ENCODE measurements at regions of chr10 and their contacts with region 1.

Region 1: DNA sequence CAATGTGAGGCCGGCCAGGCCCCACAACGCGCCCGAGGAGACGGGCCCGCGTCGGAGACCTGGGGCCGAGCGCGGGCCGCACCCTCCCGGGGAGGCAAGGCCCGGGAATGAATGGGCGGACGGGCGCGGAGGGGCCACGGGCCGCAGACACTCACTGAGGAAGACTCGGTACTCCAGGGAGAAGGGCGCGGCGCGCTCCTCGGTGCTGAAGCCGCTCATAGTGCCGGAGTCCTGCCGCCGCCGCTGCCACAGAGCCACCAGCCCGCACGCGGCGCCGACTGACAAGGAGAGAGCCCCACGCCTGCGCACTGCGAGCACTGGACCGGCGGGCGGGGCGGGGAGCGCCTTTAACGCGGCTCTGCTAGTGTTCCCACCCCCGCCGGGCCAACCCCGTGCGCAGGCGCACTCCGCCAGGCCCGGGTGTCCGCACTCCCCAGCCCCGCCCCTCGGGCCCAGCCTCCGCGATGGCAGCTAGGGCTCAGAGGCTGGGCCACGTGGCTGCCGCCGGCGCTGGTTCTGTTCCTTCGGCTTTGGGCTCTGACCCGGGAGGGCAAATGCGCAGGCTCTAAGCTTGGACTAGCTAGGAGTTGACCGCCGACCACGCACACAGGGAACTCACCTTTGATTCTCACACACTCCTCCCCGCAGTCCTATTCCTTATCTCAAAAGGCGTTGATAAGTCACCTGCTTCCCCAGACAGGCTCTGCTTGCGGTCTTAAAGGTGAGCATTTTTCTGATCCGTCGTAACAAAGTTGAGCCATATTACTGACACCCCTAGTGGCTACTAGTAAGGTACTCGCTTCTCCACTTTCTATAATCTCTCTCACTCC is at the start of gene PPA1:
- DNase-seq: peak; percentile 96
- H3K4me3 Mint-ChIP-seq: peak within 1 kb of the TSS; percentile 90
- H3K27ac Mint-ChIP-seq: peak within 1 kb of the TSS; percentile 97
- H3K4me1 Mint-ChIP-seq: peaks cover 32% of the 10 kb centered on the region
- H3K27me3 Mint-ChIP-seq: no peaks in the 10 kb centered on the region
- CTCF ChIP-seq: no peak
- total RNA-seq, gene PPA1: 221 and 293 TPM in 2 replicates

Region 2: DNA sequence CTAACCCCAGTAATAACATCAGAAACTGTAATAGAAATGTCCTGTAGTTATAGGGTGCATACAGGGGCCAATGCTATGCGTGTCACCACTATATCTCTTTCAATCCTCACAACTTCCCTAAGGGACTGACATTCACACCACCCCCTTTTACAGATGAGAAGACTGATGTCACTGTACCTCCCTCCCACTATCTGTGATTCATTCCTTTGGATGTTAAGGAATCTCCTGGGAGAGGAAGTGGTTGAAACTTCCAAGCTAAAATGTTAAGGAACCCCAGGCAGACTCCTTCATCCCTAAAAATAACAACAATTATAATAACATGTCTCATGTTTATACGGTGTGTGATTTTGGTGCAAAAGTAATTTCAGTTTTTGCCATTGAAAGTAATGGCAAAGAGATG is 426.2 kb before region 1 on chr10:
- CTCF ChIA-PET with region 1: no interaction called
- POLR2A ChIA-PET with region 1: no interaction called
- intact Hi-C with region 1: no loop called
- DNase-seq: peak; percentile 29
- H3K4me3 Mint-ChIP-seq: no peak overlapping the region
- H3K27ac Mint-ChIP-seq: no peak overlapping the region
- H3K4me1 Mint-ChIP-seq: peaks cover 7% of the 10 kb centered on the region
- H3K27me3 Mint-ChIP-seq: no peaks in the 10 kb centered on the region
- CTCF ChIP-seq: no peak

Region 3: DNA sequence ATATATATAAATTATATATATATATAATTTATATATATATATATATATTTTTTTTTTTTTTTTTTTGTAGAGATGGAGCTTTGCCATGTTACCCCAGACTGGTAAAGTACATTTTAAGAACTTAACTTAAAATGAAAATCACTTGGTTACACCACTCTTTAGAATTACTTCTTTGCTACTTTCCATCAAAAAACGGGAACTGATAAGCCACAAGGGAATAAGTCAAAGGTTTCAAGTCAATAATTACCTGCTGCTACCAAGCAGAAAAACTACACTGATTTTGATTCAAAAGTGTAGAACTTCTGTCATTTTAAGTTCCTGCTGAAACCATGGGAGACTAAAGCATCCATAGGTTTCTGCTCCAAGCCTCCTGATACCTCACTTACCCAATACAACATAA is 12.3 kb before region 1 on chr10:
- CTCF ChIA-PET with region 1: interaction called, 5 read pairs
- POLR2A ChIA-PET with region 1: interaction called, 77 read pairs
- intact Hi-C with region 1: no loop called
- DNase-seq: no peak
- H3K4me3 Mint-ChIP-seq: peak overlapping the region; percentile 45
- H3K27ac Mint-ChIP-seq: peak overlapping the region; percentile 87
- H3K4me1 Mint-ChIP-seq: peaks cover 32% of the 10 kb centered on the region
- H3K27me3 Mint-ChIP-seq: no peaks in the 10 kb centered on the region
- CTCF ChIP-seq: no peak

Region 4: GRCh38 chr10:70272925-70273316 is 39.6 kb after region 1 on chr10:
- CTCF ChIA-PET with region 1: interaction called, 4 read pairs
- POLR2A ChIA-PET with region 1: interaction called, 43 read pairs
- intact Hi-C with region 1: no loop called
- DNase-seq: peak; percentile 30
- H3K4me3 Mint-ChIP-seq: no peak overlapping the region
- H3K27ac Mint-ChIP-seq: no peak overlapping the region
- H3K4me1 Mint-ChIP-seq: peaks cover 8% of the 10 kb centered on the region
- H3K27me3 Mint-ChIP-seq: no peaks in the 10 kb centered on the region
- CTCF ChIP-seq: peak; percentile 28

Region 5: DNA sequence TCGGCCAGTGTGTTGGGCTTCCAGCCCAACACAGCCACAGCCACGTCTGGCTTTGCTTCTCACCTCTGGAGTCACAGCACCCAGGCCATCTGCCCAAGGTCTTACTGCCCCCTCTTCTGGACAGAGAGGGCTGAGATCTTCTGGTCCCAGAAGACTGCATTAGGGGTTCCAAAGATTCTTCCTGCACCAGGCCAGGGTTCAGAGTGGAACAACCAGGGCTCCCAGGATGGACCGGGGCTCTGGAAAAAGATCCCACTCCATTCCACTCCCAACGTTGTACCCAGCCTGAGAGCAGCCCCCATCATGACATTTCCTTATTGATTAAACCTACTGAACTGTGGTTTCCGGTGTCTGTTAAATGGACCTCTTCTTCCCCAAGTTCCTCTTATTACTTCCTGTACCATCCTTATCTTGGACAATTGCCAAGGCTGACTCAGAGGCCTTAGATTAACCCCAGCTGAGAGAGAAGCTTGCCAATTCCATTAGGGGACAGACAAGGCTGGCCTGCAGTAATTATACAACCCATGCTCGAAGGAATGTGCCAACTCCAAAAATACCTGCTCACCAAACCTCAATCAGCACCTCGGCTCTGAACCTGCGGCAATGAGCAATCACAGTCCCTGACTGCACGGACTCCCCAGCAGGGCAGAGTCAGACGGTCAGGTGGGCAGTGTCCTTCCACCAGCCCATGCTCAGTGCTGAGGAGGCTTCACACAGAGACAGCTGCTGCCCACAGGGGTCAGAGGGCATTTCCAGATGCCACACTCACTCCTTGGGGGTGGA is 98.4 kb after region 1 on chr10:
- CTCF ChIA-PET with region 1: interaction called, 3 read pairs
- POLR2A ChIA-PET with region 1: interaction called, 11 read pairs
- intact Hi-C with region 1: no loop called
- DNase-seq: peak; percentile 98
- H3K4me3 Mint-ChIP-seq: no peak overlapping the region
- H3K27ac Mint-ChIP-seq: peak overlapping the region; percentile 79
- H3K4me1 Mint-ChIP-seq: peaks cover 19% of the 10 kb centered on the region
- H3K27me3 Mint-ChIP-seq: no peaks in the 10 kb centered on the region
- CTCF ChIP-seq: no peak

Region 6: DNA sequence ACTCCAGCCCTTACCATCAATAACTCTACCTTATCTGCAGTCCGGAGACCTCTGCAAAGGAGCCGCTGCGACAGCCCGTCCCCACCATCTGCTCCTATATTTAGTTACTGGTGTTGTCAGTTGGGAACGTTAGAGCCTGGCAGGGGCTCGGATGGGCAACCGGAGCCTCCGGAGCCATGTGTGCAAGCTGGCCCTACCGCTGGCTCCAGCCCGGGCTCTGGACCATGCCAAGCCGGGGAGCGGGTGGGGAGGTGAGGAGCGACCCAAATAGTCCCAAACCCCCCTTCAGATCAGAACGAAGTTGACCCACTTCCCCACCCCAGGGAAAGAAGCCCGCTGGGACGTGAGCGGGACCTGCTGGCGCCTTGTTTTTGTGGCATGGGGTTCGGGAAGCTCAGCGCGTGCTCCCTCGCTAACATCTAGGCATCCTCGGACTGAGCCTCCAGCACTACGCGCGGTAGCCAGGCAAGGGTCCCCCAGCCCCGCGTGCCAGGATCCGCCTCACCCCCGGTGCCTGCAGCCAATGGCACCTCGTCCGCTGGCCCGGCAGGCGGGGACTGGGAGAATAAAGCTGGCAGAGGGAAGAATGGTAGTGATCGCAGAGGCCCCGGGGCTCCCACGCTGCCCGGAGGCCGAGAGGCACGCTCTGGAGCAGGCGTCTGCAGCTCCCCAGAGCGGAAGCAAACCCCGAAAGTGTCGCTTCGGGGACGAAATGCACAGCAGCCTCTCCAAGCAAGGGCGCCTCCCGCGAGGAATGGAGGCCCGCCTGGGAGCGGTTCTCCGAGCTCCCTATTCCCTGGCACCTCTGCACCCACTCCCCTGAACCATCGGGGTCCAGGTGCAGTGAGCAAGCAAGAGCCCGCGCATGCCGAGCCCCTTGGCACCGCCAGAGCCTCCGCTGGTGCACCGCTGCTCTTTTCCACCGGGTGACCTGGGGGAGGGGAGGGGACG is 148.4 kb after region 1 on chr10:
- CTCF ChIA-PET with region 1: no interaction called
- POLR2A ChIA-PET with region 1: interaction called, 21 read pairs
- intact Hi-C with region 1: no loop called
- DNase-seq: no peak
- H3K4me3 Mint-ChIP-seq: peak overlapping the region; percentile 75
- H3K27ac Mint-ChIP-seq: no peak overlapping the region
- H3K4me1 Mint-ChIP-seq: peaks cover 20% of the 10 kb centered on the region
- H3K27me3 Mint-ChIP-seq: no peaks in the 10 kb centered on the region
- CTCF ChIP-seq: no peak

Region 7: DNA sequence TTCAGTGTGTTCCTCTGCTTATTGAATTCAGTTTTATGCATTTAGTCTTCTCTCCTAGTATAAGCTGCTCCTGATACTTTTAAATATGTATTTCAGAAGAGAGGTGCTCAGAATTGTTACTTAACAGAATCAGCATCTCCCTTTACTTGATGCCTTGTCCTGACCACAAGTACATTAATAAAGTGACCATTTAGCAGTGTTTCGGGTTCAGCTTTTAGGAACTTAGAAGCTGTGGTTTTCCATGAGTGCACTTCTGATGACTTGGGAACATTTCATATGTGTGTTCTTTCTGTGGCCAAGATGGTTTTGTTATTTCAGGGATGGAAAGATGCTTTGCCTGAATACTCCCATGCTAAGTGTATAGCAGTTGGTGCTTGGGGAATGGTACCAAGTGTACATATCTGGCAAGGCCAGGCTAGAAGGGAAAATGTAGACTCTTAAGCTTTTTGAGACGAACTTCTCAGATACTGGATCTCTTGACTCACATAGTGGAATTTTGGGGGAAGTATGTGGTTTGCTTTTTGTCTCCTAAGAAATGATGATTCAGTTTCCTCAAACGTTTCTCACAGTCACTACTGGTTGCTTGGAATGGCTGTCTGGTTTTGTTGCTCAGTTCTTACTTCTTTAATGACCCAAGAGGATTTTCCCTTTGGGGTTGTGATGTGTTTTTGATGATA is 599.7 kb after region 1 on chr10:
- CTCF ChIA-PET with region 1: no interaction called
- POLR2A ChIA-PET with region 1: no interaction called
- intact Hi-C with region 1: no loop called
- DNase-seq: peak; percentile 46
- H3K4me3 Mint-ChIP-seq: no peak overlapping the region
- H3K27ac Mint-ChIP-seq: no peak overlapping the region
- H3K4me1 Mint-ChIP-seq: peaks cover 21% of the 10 kb centered on the region
- H3K27me3 Mint-ChIP-seq: no peaks in the 10 kb centered on the region
- CTCF ChIP-seq: no peak